ENCODE measurements at regions of chr1 and their contacts with region 1.

Region 1: GRCh38 chr1:220527908-220528678 is at the start of gene MARK1:
- DNase-seq: peak; percentile 41
- ATAC-seq: peak; percentile 67
- H3K4me3 Mint-ChIP-seq: peak within 1 kb of the TSS; percentile 76
- H3K27ac Mint-ChIP-seq: peak within 1 kb of the TSS; percentile 42
- H3K4me1 Mint-ChIP-seq: peaks cover 9% of the 10 kb centered on the region
- H3K27me3 Mint-ChIP-seq: peaks cover 62% of the 10 kb centered on the region
- total RNA-seq, gene MARK1: not detected

Region 2: GRCh38 chr1:220487297-220487820 is 40.7 kb before region 1 on chr1:
- CTCF ChIA-PET with region 1: no interaction called
- POLR2A ChIA-PET with region 1: no interaction called
- intact Hi-C with region 1: no loop called
- DNase-seq: peak; percentile 74
- ATAC-seq: peak; percentile 93
- H3K4me3 Mint-ChIP-seq: no peak overlapping the region
- H3K27ac Mint-ChIP-seq: no peak overlapping the region
- H3K4me1 Mint-ChIP-seq: peaks cover 4% of the 10 kb centered on the region
- H3K27me3 Mint-ChIP-seq: peaks cover 9% of the 10 kb centered on the region

Region 3: DNA sequence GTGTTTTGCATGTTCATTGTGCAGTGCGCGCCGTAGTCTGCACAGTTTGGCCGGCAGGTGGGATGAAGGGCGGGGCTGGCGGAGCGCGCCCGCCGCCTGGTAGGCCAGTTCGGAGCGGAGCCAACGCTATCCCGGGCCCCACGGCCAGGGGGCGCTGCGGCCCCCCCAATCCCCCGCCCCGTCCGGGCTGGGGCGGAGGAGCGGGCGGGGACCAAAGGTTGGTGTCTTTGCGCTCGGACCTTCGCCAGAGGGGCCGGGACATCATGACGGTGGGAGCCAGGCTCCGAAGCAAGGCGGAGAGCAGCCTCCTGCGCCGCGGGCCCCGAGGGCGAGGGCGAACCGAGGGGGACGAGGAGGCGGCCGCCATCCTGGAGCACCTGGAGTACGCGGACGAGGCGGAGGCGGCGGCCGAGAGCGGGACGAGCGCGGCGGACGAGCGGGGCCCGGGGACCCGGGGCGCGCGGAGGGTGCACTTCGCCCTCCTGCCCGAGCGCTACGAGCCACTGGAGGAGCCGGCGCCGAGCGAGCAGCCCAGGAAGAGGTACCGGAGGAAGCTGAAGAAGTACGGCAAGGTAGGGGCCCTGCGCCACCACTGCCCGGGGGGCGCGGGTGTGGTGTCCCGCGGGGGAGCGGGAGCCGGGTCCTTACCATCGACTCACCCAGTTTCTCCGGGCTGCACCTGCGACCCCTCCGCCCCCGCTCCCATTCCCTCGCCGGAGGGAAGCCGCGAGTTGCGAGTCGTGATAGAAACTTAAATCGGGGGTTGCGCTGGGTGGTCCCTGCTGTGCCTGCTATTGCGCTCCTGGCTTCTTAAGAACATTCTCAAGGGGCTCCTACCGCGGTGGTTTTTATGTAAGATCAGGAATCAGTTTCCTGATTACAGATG is 162.3 kb after region 1 on chr1 and contains the start of gene C1orf115:
- CTCF ChIA-PET with region 1: no interaction called
- POLR2A ChIA-PET with region 1: no interaction called
- intact Hi-C with region 1: loop called in 1 of 2 experiments (anchors 5 kb)
- DNase-seq: peak; percentile 85
- ATAC-seq: peak; percentile 96
- H3K4me3 Mint-ChIP-seq: peak within 1 kb of the TSS; percentile 71
- H3K27ac Mint-ChIP-seq: no peak within 1 kb of the TSS
- H3K4me1 Mint-ChIP-seq: peaks cover 4% of the 10 kb centered on the region
- H3K27me3 Mint-ChIP-seq: peaks cover 12% of the 10 kb centered on the region
- total RNA-seq, gene C1orf115: 0.63 to 0.78 TPM

Measured in activated CD4-positive, alpha-beta T cell treated with anti-CD3 and anti-CD28 coated beads for 36 hours (primary cell).